Caco-2 (cell line): ENCODE measurements at regions of chr15 and their contacts with region 1.

Region 1: DNA sequence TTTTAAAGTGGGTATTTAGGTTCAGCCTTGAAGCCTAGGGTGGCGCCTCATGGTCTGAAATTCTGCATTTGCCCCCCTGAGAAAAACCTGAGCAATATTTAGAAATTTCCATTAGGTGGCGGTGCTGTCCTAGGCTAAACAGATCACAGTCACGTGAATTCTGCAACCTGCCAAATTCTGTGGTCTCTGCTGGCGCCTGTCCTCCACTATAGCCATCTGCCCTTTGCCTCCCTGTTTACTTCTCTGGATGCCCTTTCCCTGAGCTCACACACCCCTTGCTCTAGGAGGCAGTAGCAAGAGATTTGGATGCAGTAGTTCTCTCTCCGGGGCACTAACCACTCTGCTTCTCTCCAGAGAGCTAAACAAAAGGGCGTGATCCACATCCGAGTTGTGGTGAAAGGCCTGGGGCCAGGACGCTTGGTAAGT is 9.1 kb downstream of the MRPS11 start:
- DNase-seq: peak in 1 of 2 experiments; percentile 54
- H3K4me3 ChIP-seq: no peak overlapping the region
- H3K4me3 Mint-ChIP-seq: no peak overlapping the region
- H3K27ac Mint-ChIP-seq: no peak overlapping the region
- H3K4me1 ChIP-seq: no peaks in the 10 kb centered on the region
- H3K4me1 Mint-ChIP-seq: peaks cover 4% of the 10 kb centered on the region
- H3K27me3 ChIP-seq: no peaks in the 10 kb centered on the region
- H3K27me3 Mint-ChIP-seq: no peaks in the 10 kb centered on the region
- CTCF ChIP-seq: peak; percentile 65

Region 2: DNA sequence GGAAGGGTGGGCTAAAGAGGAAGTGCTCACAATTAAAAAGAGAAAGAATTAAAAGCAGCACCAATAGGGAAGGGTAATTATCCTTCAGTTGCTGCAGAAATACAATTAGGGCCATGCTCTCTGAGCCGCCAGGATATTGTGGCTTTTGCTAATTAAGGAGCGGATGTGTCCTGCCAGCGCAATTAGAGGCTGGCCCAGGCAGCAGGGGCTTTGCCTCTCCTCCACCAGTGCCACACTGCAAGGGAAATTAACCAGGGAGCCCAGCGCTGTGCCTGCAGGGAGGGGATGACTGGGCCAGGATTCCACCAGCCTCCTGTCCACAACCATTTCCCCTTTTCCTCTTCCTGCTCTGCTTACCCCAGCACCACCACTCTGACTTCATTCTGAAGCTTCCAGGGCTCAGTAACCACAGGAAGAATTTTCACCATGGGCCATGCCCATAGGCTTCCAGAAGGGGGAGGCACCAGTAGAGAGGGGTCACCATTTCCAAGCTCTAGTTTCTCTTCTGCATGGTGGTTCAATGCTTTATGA is 134.1 kb after region 1 on chr15:
- CTCF ChIA-PET with region 1: no interaction called
- POLR2A ChIA-PET with region 1: no interaction called
- intact Hi-C with region 1: loop called (anchors 1 kb)
- DNase-seq: no peak
- H3K4me3 ChIP-seq: no peak overlapping the region
- H3K4me3 Mint-ChIP-seq: no peak overlapping the region
- H3K27ac Mint-ChIP-seq: no peak overlapping the region
- H3K4me1 ChIP-seq: peaks cover 12% of the 10 kb centered on the region
- H3K4me1 Mint-ChIP-seq: no peaks in the 10 kb centered on the region
- H3K27me3 ChIP-seq: no peaks in the 10 kb centered on the region
- H3K27me3 Mint-ChIP-seq: peaks cover 13% of the 10 kb centered on the region
- CTCF ChIP-seq: no peak